Activated CD4-positive, alpha-beta T cell treated with anti-CD3 and anti-CD28 coated beads for 36 hours (primary cell): ENCODE measurements at regions of chr12 and their contacts with region 1.

Region 1: DNA sequence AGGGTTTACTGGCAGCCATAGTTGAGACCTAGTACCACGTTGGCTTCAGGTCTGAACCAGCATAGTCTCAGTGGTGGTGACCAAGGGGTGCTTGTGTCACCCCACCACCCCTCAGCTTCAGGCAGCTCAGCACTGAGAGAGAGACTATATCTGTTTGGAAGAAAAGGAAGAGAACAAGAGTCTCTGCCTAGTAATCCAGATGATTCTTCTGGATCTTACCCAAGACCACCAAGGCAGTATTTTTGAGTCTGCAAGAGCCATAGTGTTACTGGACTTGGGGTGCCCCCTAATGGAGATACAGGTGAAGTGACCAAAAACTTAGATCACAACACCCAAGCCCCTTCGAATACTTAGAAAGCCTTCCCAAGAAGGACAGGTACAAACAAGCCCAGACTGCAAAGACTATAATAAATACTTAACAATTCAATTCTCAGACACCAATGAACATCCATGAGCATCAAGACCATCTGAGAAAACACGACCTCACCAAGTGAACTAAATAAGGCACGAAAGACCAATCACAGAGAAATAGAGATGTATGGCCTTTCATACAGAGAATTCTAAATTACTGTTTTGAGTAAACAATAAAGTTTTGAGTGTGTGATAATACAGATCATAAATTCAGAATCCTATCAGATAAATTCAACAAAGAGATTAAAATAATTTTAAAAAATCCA is 107.0 kb downstream of the HELB start:
- DNase-seq: peak; percentile 52
- ATAC-seq: peak; percentile 55
- H3K4me3 Mint-ChIP-seq: no peak overlapping the region
- H3K27ac Mint-ChIP-seq: no peak overlapping the region
- H3K4me1 Mint-ChIP-seq: no peaks in the 10 kb centered on the region
- H3K27me3 Mint-ChIP-seq: peaks cover 3% of the 10 kb centered on the region

Region 2: DNA sequence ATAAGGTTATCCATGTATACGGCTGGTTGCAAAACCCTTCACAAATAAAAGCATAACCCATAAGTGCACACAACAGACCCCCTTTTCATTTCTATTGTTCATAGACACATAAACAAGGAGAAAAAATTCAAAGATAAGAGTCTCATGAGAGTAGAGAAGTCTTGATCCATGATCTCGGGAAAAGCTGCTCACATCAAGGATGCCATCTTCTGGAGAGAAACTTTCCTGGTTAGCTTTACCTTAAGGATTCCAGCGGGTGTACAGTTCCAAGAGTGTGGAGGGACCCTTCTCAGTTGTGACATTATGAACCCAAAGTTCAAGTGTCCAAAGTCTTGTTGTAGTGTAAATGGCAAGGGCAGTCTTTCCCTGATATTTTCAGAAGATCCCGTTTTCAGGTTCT is 423.3 kb before region 1 on chr12:
- CTCF ChIA-PET with region 1: no interaction called
- POLR2A ChIA-PET with region 1: no interaction called
- intact Hi-C with region 1: loop called in 1 of 2 experiments (anchors 2 kb)
- DNase-seq: no peak
- ATAC-seq: no peak
- H3K4me3 Mint-ChIP-seq: no peak overlapping the region
- H3K27ac Mint-ChIP-seq: no peak overlapping the region
- H3K4me1 Mint-ChIP-seq: no peaks in the 10 kb centered on the region
- H3K27me3 Mint-ChIP-seq: peaks cover 5% of the 10 kb centered on the region

Region 3: GRCh38 chr12:66107451-66107915 is 301.9 kb before region 1 on chr12:
- CTCF ChIA-PET with region 1: no interaction called
- POLR2A ChIA-PET with region 1: no interaction called
- intact Hi-C with region 1: loop called in 1 of 2 experiments (anchors 1 kb)
- DNase-seq: peak; percentile 51
- ATAC-seq: peak; percentile 92
- H3K4me3 Mint-ChIP-seq: no peak overlapping the region
- H3K27ac Mint-ChIP-seq: no peak overlapping the region
- H3K4me1 Mint-ChIP-seq: peaks cover 2% of the 10 kb centered on the region
- H3K27me3 Mint-ChIP-seq: peaks cover 10% of the 10 kb centered on the region

Region 4: DNA sequence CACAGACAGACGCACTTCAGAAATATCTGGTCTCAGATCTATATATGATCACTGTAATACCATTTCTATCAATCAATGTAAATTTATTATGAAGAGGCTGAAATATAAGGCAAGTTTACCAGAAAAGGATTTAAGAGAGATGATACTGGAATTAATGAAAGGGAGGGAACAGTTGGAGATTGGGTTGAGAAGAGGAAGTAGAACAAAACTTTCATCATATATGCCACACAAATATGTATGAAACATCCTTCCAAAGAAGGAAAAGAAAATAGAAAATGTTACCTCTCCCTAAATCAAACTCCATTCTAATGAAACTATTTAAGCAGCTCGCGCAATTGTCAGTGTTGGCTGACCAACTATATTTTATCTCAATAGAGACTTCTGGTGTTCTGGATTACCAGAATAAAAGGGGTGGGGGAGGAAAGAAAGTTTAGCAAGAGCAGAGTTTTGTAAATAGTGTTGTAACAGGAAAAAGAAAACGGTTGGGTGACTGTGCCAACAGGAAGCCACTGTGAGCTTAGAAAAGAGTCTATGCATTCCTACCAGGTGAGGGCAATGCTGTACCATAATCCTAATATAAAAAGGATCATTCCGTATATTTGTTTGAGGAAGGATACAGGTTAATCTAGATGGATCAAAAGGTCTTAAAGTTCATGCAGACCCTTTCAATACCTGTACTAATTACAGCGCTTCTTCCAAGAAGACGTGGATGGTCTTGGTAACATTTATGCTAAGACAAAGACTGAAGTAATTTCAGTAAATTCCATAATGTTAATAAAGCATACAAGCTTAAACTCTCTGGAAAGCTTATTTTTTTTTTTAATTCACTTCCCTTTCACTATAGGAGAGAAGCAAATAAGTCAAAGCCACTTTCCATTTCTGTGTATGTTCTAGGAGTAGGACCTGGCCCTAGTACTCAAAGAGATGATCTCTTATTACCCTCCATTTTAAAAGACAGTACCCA is 264.3 kb before region 1 on chr12:
- CTCF ChIA-PET with region 1: interaction called, 6 read pairs
- POLR2A ChIA-PET with region 1: no interaction called
- intact Hi-C with region 1: loop called (anchors 1 kb)
- DNase-seq: peak; percentile 8
- ATAC-seq: peak; percentile 75
- H3K4me3 Mint-ChIP-seq: no peak overlapping the region
- H3K27ac Mint-ChIP-seq: peak overlapping the region; percentile 61
- H3K4me1 Mint-ChIP-seq: peaks cover 16% of the 10 kb centered on the region
- H3K27me3 Mint-ChIP-seq: no peaks in the 10 kb centered on the region

Region 5: DNA sequence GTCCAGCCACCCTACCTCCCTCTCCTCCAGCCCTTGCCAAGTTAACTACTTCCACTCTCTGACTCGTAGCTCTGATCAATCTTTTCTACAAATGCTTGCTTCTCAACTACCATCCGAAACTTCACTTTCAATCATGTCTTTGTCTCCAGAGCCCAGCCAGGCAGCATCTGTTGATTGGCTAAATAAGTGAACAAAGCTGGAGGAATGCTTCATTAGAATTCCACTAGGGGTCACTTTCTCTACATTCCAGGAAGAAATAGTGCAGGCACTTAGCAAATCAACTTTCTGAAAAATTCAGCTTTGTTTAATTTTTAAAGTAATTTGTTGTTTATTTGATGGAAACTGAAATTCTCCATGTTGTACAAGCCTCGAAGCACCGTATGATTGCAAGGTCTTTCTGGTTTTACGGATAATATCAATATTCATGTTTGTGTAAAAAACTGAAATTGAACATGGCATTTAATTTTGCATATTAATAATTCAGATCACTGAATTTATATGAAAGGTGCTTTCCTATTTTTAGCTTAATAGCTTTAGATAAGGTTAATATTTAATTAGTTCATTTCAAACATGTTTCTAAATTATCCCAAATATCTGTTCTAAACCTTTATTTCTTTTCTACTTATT is 139.5 kb before region 1 on chr12:
- CTCF ChIA-PET with region 1: interaction called, 19 read pairs
- POLR2A ChIA-PET with region 1: no interaction called
- intact Hi-C with region 1: loop called (anchors 1 kb)
- DNase-seq: peak; percentile 50
- ATAC-seq: peak; percentile 84
- H3K4me3 Mint-ChIP-seq: no peak overlapping the region
- H3K27ac Mint-ChIP-seq: no peak overlapping the region
- H3K4me1 Mint-ChIP-seq: peaks cover 4% of the 10 kb centered on the region
- H3K27me3 Mint-ChIP-seq: no peaks in the 10 kb centered on the region

Region 6: GRCh38 chr12:66279123-66279712 is 130.1 kb before region 1 on chr12:
- CTCF ChIA-PET with region 1: interaction called, 3 read pairs
- POLR2A ChIA-PET with region 1: no interaction called
- intact Hi-C with region 1: loop called in 1 of 2 experiments (anchors 1 kb)
- DNase-seq: peak; percentile 55
- ATAC-seq: peak; percentile 59
- H3K4me3 Mint-ChIP-seq: no peak overlapping the region
- H3K27ac Mint-ChIP-seq: no peak overlapping the region
- H3K4me1 Mint-ChIP-seq: peaks cover 37% of the 10 kb centered on the region
- H3K27me3 Mint-ChIP-seq: no peaks in the 10 kb centered on the region

Region 7: GRCh38 chr12:66647034-66647691 is 237.8 kb after region 1 on chr12:
- CTCF ChIA-PET with region 1: no interaction called
- POLR2A ChIA-PET with region 1: no interaction called
- intact Hi-C with region 1: no loop called
- DNase-seq: no peak
- ATAC-seq: no peak
- H3K4me3 Mint-ChIP-seq: no peak overlapping the region
- H3K27ac Mint-ChIP-seq: no peak overlapping the region
- H3K4me1 Mint-ChIP-seq: no peaks in the 10 kb centered on the region
- H3K27me3 Mint-ChIP-seq: no peaks in the 10 kb centered on the region